ENCODE measurements at regions of chr16 and their contacts with region 1.

Region 1: GRCh38 chr16:56414366-56414765 is 11.0 kb downstream of the AMFR start:
- DNase-seq: no peak
- ATAC-seq: no peak
- H3K4me3 ChIP-seq: no peak overlapping the region
- H3K27ac ChIP-seq: peak overlapping the region; percentile 77 to 96 (median 80)
- H3K4me1 ChIP-seq: peaks cover 57 to 65% of the 10 kb centered on the region in 2 donors
- H3K27me3 ChIP-seq: no peaks in the 10 kb centered on the region
- CTCF ChIP-seq: no peak
- POLR2A ChIP-seq: no peak

Region 2: GRCh38 chr16:56005958-56006357 is 408.4 kb before region 1 on chr16:
- in situ Hi-C with region 1: no loop called
- intact Hi-C with region 1: no loop called
- DNase-seq: no peak
- ATAC-seq: no peak
- H3K4me3 ChIP-seq: no peak overlapping the region
- H3K27ac ChIP-seq: no peak overlapping the region
- H3K4me1 ChIP-seq: no peaks in the 10 kb centered on the region
- H3K27me3 ChIP-seq: no peaks in the 10 kb centered on the region
- CTCF ChIP-seq: no peak
- POLR2A ChIP-seq: no peak

Region 3: DNA sequence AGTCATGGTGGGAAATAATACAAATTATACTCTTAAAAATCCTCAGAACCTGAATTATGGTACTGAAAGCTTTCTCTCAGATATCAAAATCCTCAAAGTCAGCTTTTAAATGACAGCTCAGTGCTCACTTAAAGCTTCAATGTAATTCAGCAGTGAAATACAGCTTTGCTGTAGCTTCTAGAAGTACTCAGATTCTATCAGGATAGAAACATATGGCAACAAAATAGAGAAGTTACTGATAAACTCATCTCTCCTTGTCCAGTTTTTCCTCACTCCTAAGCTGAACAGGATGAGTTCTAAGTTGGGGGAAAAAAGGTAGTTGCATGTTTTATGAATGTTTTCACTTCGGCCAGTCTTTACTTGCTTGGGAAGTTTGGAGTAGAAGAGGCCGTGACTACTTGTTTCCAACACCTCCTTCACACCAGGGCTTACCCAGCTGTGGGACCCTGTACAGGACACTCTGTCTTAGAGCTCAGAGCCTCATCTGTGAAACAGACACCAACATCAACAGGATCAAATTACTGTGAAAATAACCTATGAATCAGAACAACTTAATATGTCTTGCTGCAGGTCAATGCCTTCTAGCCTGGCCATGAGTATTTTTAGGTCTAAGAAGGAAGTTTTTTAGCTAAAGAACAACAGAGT is 67.2 kb after region 1 on chr16:
- in situ Hi-C with region 1: no loop called
- intact Hi-C with region 1: loop called (anchors 5 kb)
- DNase-seq: peak; percentile 83 to 89
- ATAC-seq: peak; percentile 86 to 91
- H3K4me3 ChIP-seq: no peak overlapping the region
- H3K27ac ChIP-seq: peak overlapping the region; percentile 92 to 98 (median 94)
- H3K4me1 ChIP-seq: peaks cover 38 to 62% of the 10 kb centered on the region in 2 donors
- H3K27me3 ChIP-seq: no peaks in the 10 kb centered on the region
- CTCF ChIP-seq: no peak
- POLR2A ChIP-seq: peak; percentile 45 to 66